ENCODE measurements at regions of chr2 and their contacts with region 1.

Region 1: DNA sequence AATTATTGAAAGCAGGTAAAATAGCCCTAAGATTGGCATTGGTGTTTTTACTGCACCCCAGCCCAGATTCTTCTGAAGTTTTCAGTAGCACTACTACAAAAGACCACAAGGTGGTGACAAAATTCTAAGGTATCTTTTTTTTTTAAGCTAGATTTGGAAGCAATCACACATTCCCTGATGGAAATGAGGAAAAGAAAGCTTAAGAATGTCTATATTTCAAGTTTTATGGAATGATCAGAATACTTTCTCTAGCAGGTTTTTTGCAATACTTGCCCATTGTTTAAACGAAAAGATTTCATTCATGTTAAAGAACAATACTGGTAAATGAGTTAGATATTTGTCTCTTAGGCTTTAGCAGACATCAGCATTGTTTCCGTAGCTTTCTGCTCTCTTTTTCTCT is 32.1 kb upstream of the ZNF638 start:
- DNase-seq: no peak
- H3K4me3 Mint-ChIP-seq: no peak overlapping the region
- H3K27ac Mint-ChIP-seq: no peak overlapping the region
- H3K4me1 Mint-ChIP-seq: no peaks in the 10 kb centered on the region
- H3K27me3 Mint-ChIP-seq: no peaks in the 10 kb centered on the region

Region 2: GRCh38 chr2:71331581-71332434 is 32.3 kb after region 1 on chr2 and contains the start of gene ZNF638:
- CTCF ChIA-PET with region 1: interaction called, 19 read pairs
- DNase-seq: peak; percentile 94
- H3K4me3 Mint-ChIP-seq: peak within 1 kb of the TSS; percentile 100
- H3K27ac Mint-ChIP-seq: peak within 1 kb of the TSS; percentile 99
- H3K4me1 Mint-ChIP-seq: peaks cover 29% of the 10 kb centered on the region
- H3K27me3 Mint-ChIP-seq: peaks cover 9% of the 10 kb centered on the region

Region 3: DNA sequence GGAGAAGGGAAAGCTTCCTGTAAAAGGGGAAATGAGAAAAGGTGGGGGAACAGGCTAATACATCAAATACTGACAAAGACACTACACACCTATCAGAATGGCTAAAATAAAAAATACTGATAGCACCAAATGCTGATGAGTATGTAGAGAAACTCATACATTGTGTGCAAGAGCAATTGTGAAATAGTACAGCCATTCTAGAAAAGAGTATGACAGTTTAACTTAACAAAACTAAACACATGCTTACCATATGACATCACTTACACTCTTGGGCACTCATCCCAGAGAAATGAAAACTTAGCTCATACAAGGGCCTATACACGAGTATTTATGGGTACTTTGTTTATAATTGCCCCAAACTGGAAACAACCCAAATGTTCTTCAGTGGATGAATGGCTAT is 85.5 kb after region 1 on chr2:
- CTCF ChIA-PET with region 1: no interaction called
- DNase-seq: no peak
- H3K4me3 Mint-ChIP-seq: no peak overlapping the region
- H3K27ac Mint-ChIP-seq: no peak overlapping the region
- H3K4me1 Mint-ChIP-seq: no peaks in the 10 kb centered on the region
- H3K27me3 Mint-ChIP-seq: no peaks in the 10 kb centered on the region

Measured in activated naive CD4-positive, alpha-beta T cell treated with anti-CD3 and anti-CD28 coated beads, Interleukin-2, amount 10 ng/mL, durations not matched to agents 7 days and 5 days (primary cell).